MCF 10A (cell line): ENCODE measurements at regions of chr6 and their contacts with region 1.

Region 1: DNA sequence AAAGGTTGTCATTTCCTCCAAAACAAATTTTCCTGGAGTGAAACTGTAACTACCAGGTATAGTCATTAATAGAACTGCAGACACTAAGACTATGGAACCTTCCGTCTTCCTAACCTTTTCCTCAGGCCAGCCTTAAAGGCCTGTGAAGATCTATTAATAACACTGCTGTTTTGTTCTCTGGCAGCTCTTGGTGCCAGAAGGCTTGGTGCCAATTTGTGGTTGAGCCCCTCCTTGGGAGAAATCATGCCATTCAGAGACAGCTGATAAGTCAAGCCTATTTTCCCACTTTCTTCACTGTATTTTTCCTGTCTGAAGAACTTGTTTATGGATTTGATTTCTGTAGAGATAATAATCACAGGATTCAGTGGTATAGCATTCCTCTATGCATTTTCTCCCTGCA is 64.8 kb downstream of the HCRTR2 start:
- DNase-seq: peak; percentile 37
- H3K4me3 Mint-ChIP-seq: no peak overlapping the region
- H3K27ac Mint-ChIP-seq: no peak overlapping the region
- H3K4me1 Mint-ChIP-seq: peaks cover 10% of the 10 kb centered on the region
- H3K27me3 Mint-ChIP-seq: no peaks in the 10 kb centered on the region
- CTCF ChIP-seq: no peak

Region 2: GRCh38 chr6:53979468-53980067 is 1259.5 kb before region 1 on chr6:
- CTCF ChIA-PET with region 1: interaction called, 4 read pairs
- POLR2A ChIA-PET with region 1: no interaction called
- intact Hi-C with region 1: loop called (anchors 2 kb)
- DNase-seq: peak; percentile 58
- H3K4me3 Mint-ChIP-seq: no peak overlapping the region
- H3K27ac Mint-ChIP-seq: no peak overlapping the region
- H3K4me1 Mint-ChIP-seq: peaks cover 17% of the 10 kb centered on the region
- H3K27me3 Mint-ChIP-seq: no peaks in the 10 kb centered on the region
- CTCF ChIP-seq: peak; percentile 72

Region 3: DNA sequence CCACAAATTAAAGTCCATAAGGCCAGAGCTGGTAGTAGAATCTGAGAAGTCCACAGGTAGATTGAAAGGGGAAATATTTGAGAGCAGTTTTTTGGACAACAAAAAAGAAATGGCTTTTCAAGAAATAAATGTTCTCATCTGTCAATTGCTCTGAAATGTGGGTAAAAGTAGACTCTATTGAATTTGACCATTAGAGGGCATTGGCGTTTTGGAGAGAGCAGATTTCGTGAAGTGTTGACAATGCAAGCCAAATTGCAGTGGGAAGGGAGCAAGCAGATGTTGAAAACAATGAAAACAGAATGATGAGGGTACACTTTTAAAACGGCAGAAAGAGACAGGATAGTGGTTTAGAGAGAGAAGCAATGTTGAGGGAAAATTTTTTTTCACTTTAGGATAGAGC is 541.7 kb before region 1 on chr6:
- CTCF ChIA-PET with region 1: interaction called, 10 read pairs
- POLR2A ChIA-PET with region 1: no interaction called
- intact Hi-C with region 1: loop called (anchors 2 kb)
- DNase-seq: peak; percentile 32
- H3K4me3 Mint-ChIP-seq: no peak overlapping the region
- H3K27ac Mint-ChIP-seq: peak overlapping the region; percentile 6
- H3K4me1 Mint-ChIP-seq: peaks cover 10% of the 10 kb centered on the region
- H3K27me3 Mint-ChIP-seq: no peaks in the 10 kb centered on the region
- CTCF ChIP-seq: peak; percentile 31

Region 4: GRCh38 chr6:55379895-55380294 is 140.8 kb after region 1 on chr6:
- CTCF ChIA-PET with region 1: no interaction called
- POLR2A ChIA-PET with region 1: no interaction called
- intact Hi-C with region 1: no loop called
- DNase-seq: peak; percentile 33
- H3K4me3 Mint-ChIP-seq: no peak overlapping the region
- H3K27ac Mint-ChIP-seq: no peak overlapping the region
- H3K4me1 Mint-ChIP-seq: peaks cover 6% of the 10 kb centered on the region
- H3K27me3 Mint-ChIP-seq: no peaks in the 10 kb centered on the region
- CTCF ChIP-seq: no peak